ENCODE measurements at regions of chr12 and their contacts with region 1.

Region 1: DNA sequence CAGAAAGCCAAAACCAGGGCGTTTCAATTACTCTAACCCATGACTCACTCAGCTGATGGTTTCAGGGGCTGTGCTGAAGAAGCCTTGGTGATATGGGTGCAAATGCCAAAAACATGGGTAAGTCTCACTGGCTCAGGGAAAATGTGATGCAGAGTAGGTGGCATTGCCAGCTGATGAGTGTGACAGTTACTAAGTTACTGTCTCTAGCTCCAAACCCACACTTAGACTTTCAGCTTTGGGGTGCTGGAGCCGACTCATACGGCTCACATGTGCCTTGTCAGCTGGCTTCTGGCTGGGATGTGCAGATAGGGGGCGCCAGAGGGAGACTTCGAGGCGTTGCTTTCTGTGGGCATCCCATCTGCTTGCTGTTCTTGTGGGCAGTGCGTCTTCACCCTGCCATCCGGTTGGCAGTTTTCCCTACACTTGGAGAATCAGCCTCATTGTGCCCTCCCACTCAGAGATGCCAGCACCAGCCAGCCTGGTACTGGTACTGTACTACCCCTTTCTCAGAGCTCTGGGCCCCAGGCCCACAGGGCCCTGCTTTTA is 11.1 kb upstream of the KRT7 start:
- DNase-seq: peak; percentile 93
- ATAC-seq: peak; percentile 91
- H3K4me3 Mint-ChIP-seq: no peak overlapping the region
- H3K27ac Mint-ChIP-seq: no peak overlapping the region
- H3K4me1 Mint-ChIP-seq: peaks cover 5% of the 10 kb centered on the region; the same call in 1 of the 2 replicates
- H3K27me3 Mint-ChIP-seq: peaks cover 8% of the 10 kb centered on the region
- CTCF ChIP-seq: peak; percentile 87

Region 2: DNA sequence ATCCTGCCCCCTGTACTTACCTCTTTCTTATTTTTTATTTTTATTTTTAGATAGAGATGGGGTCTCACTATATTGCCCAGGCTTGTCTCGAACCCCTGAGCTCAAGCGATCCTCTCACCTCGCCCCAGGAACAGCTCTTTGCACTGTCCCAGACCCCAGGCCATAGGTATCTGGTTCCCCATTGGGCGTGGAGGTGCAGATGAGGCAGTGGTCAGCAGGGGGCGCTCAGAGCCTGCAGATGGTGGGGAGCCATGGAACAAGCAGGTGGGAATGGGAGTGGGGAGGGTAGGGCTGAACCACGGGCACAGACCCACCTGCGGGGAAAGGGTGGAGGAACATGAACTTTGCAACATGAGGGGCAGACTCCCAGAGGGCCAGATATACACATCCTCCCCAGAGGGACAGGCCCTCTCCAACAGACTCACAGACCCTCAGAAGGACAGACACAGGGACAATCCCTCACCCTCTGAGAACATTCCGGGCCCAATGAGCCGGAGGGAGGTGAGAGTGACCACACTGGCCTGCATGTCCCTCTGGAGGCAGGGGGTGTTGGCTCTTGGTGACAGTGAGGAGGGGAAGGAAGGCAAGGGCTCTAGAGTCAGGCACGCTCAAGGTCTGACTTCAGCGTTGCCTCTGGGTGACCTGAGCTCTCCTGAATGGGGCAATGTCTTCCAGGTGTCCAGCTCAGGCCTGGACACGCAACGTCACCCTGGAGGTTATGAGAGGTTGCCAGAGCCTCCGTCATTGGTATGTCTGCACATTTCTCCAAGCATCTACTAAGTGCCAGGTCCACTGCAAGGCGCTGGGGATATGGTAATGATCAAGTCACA is 65.0 kb before region 1 on chr12:
- CTCF ChIA-PET with region 1: interaction called, 60 read pairs
- POLR2A ChIA-PET with region 1: no interaction called
- DNase-seq: peak; percentile 94
- ATAC-seq: peak; percentile 88
- H3K4me3 Mint-ChIP-seq: no peak overlapping the region
- H3K27ac Mint-ChIP-seq: no peak overlapping the region
- H3K4me1 Mint-ChIP-seq: no peaks in the 10 kb centered on the region
- H3K27me3 Mint-ChIP-seq: no peaks in the 10 kb centered on the region
- CTCF ChIP-seq: peak; percentile 97

Region 3: GRCh38 chr12:52181746-52182145 is 40.2 kb before region 1 on chr12:
- CTCF ChIA-PET with region 1: interaction called, 12 read pairs
- POLR2A ChIA-PET with region 1: no interaction called
- DNase-seq: peak; percentile 36
- ATAC-seq: peak; percentile 68
- H3K4me3 Mint-ChIP-seq: no peak overlapping the region
- H3K27ac Mint-ChIP-seq: peak overlapping the region; percentile 69; the same call in 1 of the 2 replicates
- H3K4me1 Mint-ChIP-seq: peaks cover 32% of the 10 kb centered on the region
- H3K27me3 Mint-ChIP-seq: no peaks in the 10 kb centered on the region; the same call in 1 of the 2 replicates
- CTCF ChIP-seq: no peak

Region 4: DNA sequence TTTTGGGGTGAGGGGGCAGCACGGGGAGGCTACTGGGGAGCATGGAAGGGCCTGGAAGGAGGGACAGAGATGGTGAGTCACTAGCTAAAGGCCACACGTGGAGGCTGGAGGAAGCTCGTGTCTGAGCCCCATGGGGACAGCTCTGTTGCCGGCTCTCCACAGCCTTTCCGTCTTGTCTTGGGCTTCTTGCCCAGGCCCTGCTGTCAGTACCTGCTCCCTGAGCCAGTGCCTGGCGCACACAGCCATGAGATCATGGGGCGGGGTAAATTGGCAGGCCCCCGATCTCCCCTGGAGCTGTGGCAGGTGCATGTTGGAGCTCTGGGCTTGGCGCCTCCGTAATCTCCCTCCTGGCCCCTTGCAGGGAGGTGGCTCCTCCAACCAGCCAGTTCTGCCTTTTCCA is 14.1 kb before region 1 on chr12:
- CTCF ChIA-PET with region 1: interaction called, 36 read pairs
- POLR2A ChIA-PET with region 1: no interaction called
- DNase-seq: no peak
- ATAC-seq: no peak
- H3K4me3 Mint-ChIP-seq: no peak overlapping the region
- H3K27ac Mint-ChIP-seq: no peak overlapping the region
- H3K4me1 Mint-ChIP-seq: peaks cover 14% of the 10 kb centered on the region
- H3K27me3 Mint-ChIP-seq: no peaks in the 10 kb centered on the region
- CTCF ChIP-seq: no peak

Region 5: DNA sequence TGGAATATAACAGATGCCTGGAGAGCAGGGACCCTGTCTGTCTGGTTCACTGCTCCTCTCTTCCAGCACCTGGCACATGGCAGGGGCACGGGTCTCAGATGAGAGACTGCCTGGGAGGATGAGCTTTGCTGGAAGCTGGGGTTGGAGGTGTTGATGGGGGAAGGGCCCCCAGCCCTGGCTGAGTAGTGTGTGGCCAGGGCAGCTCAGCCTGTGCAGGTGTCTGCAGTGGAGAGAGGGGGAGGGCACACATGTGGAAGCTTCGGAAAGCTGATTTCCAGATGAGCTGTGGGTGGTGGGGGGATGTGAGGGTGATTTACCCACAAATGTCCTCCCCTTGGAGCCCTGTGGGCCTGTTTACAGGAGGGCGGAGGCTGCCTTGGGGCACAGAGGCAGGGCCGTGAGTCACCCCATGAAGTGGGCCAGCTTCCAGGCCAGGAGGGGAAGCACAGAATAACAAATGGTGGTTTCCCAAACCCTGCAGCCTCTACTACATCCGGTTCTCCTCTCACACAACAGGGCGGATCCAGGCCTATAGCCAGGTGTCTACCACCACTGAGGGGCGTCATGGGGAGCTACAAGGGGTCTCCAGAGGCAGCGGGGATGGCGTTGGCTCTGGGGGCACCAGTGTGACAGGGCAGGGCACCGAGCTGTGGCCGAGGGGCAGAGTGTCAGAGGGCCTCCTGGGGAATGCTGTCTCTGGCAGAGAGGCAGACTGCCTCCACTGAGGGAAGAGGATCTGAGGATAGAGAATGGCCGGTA is 22.1 kb after region 1 on chr12:
- CTCF ChIA-PET with region 1: interaction called, 42 read pairs
- POLR2A ChIA-PET with region 1: no interaction called
- DNase-seq: no peak
- ATAC-seq: no peak
- H3K4me3 Mint-ChIP-seq: no peak overlapping the region
- H3K27ac Mint-ChIP-seq: no peak overlapping the region
- H3K4me1 Mint-ChIP-seq: peaks cover 36% of the 10 kb centered on the region
- H3K27me3 Mint-ChIP-seq: peaks cover 9% of the 10 kb centered on the region
- CTCF ChIP-seq: no peak

Region 6: GRCh38 chr12:52258335-52258901 is 36.4 kb after region 1 on chr12:
- CTCF ChIA-PET with region 1: interaction called, 13 read pairs
- POLR2A ChIA-PET with region 1: no interaction called
- DNase-seq: peak; percentile 64
- ATAC-seq: peak; percentile 78
- H3K4me3 Mint-ChIP-seq: no peak overlapping the region
- H3K27ac Mint-ChIP-seq: no peak overlapping the region
- H3K4me1 Mint-ChIP-seq: peaks cover 9% of the 10 kb centered on the region
- H3K27me3 Mint-ChIP-seq: peaks cover 60% of the 10 kb centered on the region
- CTCF ChIP-seq: no peak

Region 7: GRCh38 chr12:52319097-52319496 is 97.1 kb after region 1 on chr12:
- CTCF ChIA-PET with region 1: interaction called, 14 read pairs
- POLR2A ChIA-PET with region 1: no interaction called
- DNase-seq: peak; percentile 27
- ATAC-seq: peak; percentile 47
- H3K4me3 Mint-ChIP-seq: no peak overlapping the region
- H3K27ac Mint-ChIP-seq: no peak overlapping the region
- H3K4me1 Mint-ChIP-seq: no peaks in the 10 kb centered on the region
- H3K27me3 Mint-ChIP-seq: peaks cover 5% of the 10 kb centered on the region; the same call in 1 of the 2 replicates
- CTCF ChIP-seq: no peak